ENCODE measurements at regions of chr3 and their contacts with region 1.

Region 1: DNA sequence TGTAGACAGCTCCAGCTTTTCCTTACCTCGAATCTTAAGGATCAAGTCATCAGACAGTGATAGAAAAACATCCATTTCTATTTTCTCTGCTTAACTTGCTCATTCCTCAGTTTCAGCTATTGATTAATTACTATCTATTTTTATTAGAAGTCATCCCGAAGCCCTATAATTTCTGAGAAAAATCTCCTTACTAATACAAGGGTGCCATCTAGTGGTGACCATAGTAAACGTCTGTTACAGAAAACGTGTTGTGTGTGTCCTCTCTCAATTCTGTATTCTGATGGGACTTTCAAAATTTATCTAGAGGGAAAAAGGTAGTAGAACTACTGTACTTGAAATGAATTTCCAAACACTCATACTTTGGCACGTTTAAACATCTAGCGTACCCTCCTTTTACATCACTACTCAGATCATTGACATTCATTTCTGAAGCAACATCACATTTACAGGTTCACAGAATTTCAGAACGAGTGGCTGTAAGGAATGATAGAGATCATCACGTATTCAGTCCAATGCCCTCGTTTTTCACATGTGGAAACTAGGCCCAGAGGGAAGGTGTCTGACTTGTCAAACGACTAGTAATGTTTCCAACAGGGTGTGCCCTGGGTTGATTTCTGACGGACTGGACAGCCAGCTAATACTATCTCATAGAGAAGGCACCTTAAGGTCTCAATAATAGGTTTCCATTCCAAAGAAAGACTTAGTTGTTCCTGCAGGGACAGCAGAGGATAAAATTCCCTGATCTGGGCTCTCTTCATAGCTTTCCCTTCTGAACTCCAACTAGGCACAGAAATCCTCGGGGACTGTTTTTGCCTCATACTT is 25.6 kb downstream of the HACD2 start:
- DNase-seq: no peak
- ATAC-seq: peak; percentile 68
- H3K4me3 ChIP-seq: no peak overlapping the region
- H3K27ac ChIP-seq: no peak overlapping the region
- H3K4me1 ChIP-seq: no peaks in the 10 kb centered on the region
- H3K27me3 ChIP-seq: no peaks in the 10 kb centered on the region

Region 2: DNA sequence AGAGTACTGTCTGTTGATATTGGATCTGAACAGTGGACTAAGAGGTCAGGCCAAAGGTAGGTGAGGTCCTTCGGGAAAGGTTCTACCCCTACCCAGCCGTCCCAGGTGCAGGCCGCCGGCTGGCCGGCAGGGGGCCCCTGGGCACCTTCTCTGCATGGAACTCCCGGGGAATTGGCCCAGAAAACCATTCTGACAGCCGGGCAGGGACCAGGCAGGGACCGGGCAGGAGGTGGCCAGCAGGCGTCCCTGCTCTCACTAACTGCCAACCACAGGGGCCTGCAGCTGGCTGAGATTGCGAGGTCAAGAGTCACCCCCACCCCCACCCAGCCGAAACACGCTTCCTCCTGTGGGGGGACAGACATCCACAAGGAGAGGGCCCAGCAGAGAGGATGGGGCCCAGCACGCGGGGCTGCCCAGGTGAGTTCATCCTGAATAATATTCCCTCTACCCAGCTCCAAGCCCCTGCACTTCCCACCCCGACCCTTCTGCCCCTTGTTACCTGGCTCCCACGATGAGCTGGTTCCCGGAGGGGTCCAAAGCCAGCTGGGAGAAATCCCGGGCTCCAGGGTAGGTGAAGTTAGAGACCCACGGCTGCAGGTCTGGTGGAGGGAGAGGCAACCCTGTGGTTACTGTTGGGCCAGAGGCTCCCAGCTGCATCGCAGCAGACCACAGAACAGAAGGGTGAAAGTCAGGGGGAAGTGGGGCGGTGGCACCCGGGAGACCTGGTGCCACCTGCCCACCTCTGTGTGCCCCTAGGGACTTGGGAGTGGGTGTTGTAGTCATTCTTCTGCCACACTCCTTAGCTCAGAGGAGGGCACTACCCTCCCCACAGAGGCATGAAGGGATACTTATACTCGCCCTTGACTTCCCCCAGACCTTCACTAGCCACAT is 616.1 kb before region 1 on chr3:
- intact Hi-C with region 1: loop called in 1 of 2 experiments (anchors 10 kb)
- DNase-seq: peak; percentile 82 to 90
- ATAC-seq: peak; percentile 88
- H3K4me3 ChIP-seq: no peak overlapping the region
- H3K27ac ChIP-seq: no peak overlapping the region
- H3K4me1 ChIP-seq: no peaks in the 10 kb centered on the region
- H3K27me3 ChIP-seq: no peaks in the 10 kb centered on the region

Region 3: GRCh38 chr3:123328851-123329635 is 230.2 kb before region 1 on chr3:
- intact Hi-C with region 1: loop called (anchors 2 kb)
- DNase-seq: peak; percentile 83 to 94
- ATAC-seq: peak; percentile 79
- H3K4me3 ChIP-seq: no peak overlapping the region
- H3K27ac ChIP-seq: peak overlapping the region in 1 of 2 donors; percentile 95
- H3K4me1 ChIP-seq: no peaks in the 10 kb centered on the region
- H3K27me3 ChIP-seq: no peaks in the 10 kb centered on the region

Region 4: DNA sequence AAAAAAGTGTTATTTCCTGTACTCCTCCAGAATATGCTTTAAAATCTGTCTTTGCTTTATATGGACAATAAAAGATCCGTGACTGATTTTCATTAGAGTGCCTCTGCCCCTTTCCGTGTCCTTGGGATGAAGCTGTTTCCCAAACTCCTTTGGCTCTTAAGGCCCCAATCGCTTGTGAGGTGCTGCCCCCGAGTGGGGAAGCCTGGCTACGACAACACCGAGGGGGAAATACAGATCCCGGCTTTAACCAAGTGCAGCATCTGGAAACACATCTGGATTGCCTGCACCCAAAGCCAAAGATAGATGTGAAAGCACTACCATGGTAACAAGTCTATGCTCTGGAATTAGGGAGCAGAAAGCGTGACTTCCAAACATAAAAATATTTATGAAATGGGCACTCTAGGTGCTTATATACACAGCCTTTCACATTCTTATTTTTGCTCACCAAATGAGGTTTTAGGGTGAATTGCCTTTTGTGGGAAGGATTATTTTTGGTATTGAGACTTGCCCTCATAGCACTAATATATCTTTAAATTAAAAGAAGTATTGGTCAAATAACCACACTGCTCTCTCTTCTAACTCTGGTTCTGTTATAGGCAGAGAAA is 69.7 kb before region 1 on chr3:
- intact Hi-C with region 1: loop called in 1 of 2 experiments (anchors 5 kb)
- DNase-seq: peak; percentile 75 to 88
- ATAC-seq: peak; percentile 91
- H3K4me3 ChIP-seq: no peak overlapping the region
- H3K27ac ChIP-seq: peak overlapping the region in 1 of 2 donors; percentile 86
- H3K4me1 ChIP-seq: peaks cover 0 to 2% of the 10 kb centered on the region in 2 donors
- H3K27me3 ChIP-seq: no peaks in the 10 kb centered on the region

Region 5: GRCh38 chr3:123508178-123508577 is 51.1 kb before region 1 on chr3:
- intact Hi-C with region 1: loop called in 1 of 2 experiments (anchors 5 kb)
- DNase-seq: no peak
- ATAC-seq: no peak
- H3K4me3 ChIP-seq: no peak overlapping the region
- H3K27ac ChIP-seq: no peak overlapping the region
- H3K4me1 ChIP-seq: no peaks in the 10 kb centered on the region
- H3K27me3 ChIP-seq: no peaks in the 10 kb centered on the region